ENCODE measurements at regions of chr12 and their contacts with region 1.

Region 1: DNA sequence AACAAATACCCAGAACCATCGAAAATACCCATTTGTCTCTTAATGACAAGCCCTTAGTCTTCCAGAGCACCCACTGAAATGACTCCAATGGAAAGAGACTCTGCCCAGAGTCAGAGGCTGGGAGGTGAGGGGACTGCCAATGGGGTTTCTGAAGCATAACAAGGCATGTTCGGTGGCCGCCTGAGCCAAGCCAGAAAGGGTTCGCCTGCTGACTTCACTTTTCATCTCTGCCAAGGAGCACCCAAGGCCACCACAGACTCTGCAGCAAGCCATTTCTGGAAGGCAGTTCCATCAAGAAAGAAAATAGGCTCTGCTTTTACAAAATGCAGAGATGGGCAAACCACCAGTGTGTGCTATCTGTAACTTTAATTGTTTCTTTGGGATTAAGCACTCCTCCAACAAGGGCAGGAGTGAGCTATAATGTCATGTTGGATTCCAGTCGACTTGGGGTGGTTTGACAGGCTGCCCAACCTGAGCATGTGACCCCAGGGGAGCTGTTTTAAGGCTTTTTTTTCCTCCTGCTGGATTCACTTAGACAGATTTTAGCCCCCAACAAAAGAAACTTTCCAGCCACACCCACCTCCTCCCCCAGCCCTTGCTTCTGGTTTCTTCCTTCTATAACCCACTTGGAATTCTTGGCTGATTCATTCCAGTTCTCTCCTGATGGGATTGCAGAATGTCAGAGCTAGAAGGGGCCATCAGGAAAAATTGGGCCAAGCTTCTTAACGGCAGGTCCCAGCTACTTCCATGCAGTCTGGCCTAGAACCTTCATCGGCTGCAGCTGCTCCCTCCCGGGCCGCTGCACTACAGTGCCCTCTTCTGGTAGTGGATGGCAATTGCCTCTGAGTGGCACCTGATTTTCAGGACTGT is 24.1 kb downstream of the CKAP4 start:
- DNase-seq: peak; percentile 49 to 77 (median 54)
- H3K4me3 ChIP-seq: no peak overlapping the region
- H3K4me3 Mint-ChIP-seq: no peak overlapping the region
- H3K27ac ChIP-seq: no peak overlapping the region
- H3K27ac Mint-ChIP-seq: peak overlapping the region in 2 of 8 donors; percentile 40 to 79
- H3K4me1 ChIP-seq: peaks cover 8% of the 10 kb centered on the region
- H3K4me1 Mint-ChIP-seq: peaks cover 13 to 20% (median 14%) of the 10 kb centered on the region in 3 donors
- H3K27me3 ChIP-seq: no peaks in the 10 kb centered on the region
- H3K27me3 Mint-ChIP-seq: peaks cover 13 to 21% of the 10 kb centered on the region in 2 donors

Region 2: DNA sequence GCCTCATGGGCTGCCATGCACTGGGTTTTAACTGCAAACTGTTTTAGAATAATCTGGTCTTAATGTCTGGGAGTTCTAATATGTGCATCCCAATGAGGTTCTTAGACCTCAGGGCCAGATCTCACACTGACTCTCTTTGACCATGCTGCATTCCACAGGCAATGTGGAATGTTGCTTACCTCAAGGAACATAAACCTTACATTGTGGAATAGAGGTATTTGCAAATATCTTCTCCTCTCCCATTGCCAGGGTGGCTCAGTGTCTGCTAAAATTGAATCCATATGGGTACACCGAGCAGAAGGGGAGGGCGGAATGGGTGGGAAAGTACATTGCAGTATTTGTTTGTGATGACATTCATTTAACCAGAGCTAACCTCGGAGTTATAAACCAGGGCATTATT is 1688.4 kb before region 1 on chr12:
- CTCF ChIA-PET with region 1: no interaction called
- POLR2A ChIA-PET with region 1: no interaction called
- DNase-seq: no peak
- H3K4me3 ChIP-seq: no peak overlapping the region
- H3K4me3 Mint-ChIP-seq: no peak overlapping the region
- H3K27ac ChIP-seq: no peak overlapping the region
- H3K27ac Mint-ChIP-seq: peak overlapping the region in 3 of 8 donors; percentile 30 to 94 (median 56)
- H3K4me1 ChIP-seq: peaks cover 8% of the 10 kb centered on the region
- H3K4me1 Mint-ChIP-seq: peaks cover 76 to 98% (median 96%) of the 10 kb centered on the region in 3 donors
- H3K27me3 ChIP-seq: no peaks in the 10 kb centered on the region
- H3K27me3 Mint-ChIP-seq: no peaks in the 10 kb centered on the region

Region 3: DNA sequence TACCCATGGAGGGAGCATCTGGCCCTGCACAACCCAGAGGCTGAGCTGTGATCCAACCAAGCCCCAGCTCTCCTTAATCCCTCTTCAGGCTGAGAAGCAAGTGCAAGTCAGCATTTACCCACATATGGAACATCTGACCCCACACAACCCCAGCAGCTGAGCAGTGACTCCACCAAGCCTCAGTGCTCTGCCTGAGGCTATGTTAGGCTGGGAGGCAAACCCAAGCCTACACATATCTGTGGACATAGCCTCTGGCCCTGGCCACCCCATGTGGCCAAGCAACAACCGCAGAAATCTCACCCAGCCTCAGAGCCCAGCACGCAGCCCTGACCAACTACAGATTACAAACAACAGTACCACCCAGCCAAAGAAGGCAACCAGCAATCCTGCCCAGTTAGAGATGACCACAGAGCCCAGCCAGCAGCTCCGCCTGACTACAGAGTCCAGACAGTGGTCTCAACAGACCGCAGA is 227.7 kb before region 1 on chr12:
- CTCF ChIA-PET with region 1: no interaction called
- POLR2A ChIA-PET with region 1: no interaction called
- DNase-seq: no peak
- H3K4me3 ChIP-seq: no peak overlapping the region
- H3K4me3 Mint-ChIP-seq: no peak overlapping the region
- H3K27ac ChIP-seq: no peak overlapping the region
- H3K27ac Mint-ChIP-seq: no peak overlapping the region
- H3K4me1 ChIP-seq: no peaks in the 10 kb centered on the region
- H3K4me1 Mint-ChIP-seq: no peaks in the 10 kb centered on the region
- H3K27me3 ChIP-seq: peaks cover 3% of the 10 kb centered on the region
- H3K27me3 Mint-ChIP-seq: peaks cover 4 to 16% of the 10 kb centered on the region in 2 donors

Region 4: GRCh38 chr12:106238152-106238551 is 14.4 kb after region 1 on chr12:
- CTCF ChIA-PET with region 1: interaction called, 12 read pairs
- POLR2A ChIA-PET with region 1: no interaction called
- DNase-seq: no peak
- H3K4me3 ChIP-seq: no peak overlapping the region
- H3K4me3 Mint-ChIP-seq: no peak overlapping the region
- H3K27ac ChIP-seq: no peak overlapping the region
- H3K27ac Mint-ChIP-seq: peak overlapping the region in 1 of 8 donors; percentile 55
- H3K4me1 ChIP-seq: no peaks in the 10 kb centered on the region
- H3K4me1 Mint-ChIP-seq: peaks cover 0 to 1% (median 0%) of the 10 kb centered on the region in 3 donors
- H3K27me3 ChIP-seq: no peaks in the 10 kb centered on the region
- H3K27me3 Mint-ChIP-seq: peaks cover 0 to under 1% of the 10 kb centered on the region in 2 donors

Region 5: GRCh38 chr12:106276032-106276740 is 52.5 kb after region 1 on chr12:
- CTCF ChIA-PET with region 1: interaction called, 23 read pairs
- POLR2A ChIA-PET with region 1: no interaction called
- DNase-seq: no peak
- H3K4me3 ChIP-seq: no peak overlapping the region
- H3K4me3 Mint-ChIP-seq: no peak overlapping the region
- H3K27ac ChIP-seq: no peak overlapping the region
- H3K27ac Mint-ChIP-seq: no peak overlapping the region
- H3K4me1 ChIP-seq: no peaks in the 10 kb centered on the region
- H3K4me1 Mint-ChIP-seq: no peaks in the 10 kb centered on the region
- H3K27me3 ChIP-seq: no peaks in the 10 kb centered on the region
- H3K27me3 Mint-ChIP-seq: peaks cover 0 to under 1% of the 10 kb centered on the region in 2 donors

Region 6: DNA sequence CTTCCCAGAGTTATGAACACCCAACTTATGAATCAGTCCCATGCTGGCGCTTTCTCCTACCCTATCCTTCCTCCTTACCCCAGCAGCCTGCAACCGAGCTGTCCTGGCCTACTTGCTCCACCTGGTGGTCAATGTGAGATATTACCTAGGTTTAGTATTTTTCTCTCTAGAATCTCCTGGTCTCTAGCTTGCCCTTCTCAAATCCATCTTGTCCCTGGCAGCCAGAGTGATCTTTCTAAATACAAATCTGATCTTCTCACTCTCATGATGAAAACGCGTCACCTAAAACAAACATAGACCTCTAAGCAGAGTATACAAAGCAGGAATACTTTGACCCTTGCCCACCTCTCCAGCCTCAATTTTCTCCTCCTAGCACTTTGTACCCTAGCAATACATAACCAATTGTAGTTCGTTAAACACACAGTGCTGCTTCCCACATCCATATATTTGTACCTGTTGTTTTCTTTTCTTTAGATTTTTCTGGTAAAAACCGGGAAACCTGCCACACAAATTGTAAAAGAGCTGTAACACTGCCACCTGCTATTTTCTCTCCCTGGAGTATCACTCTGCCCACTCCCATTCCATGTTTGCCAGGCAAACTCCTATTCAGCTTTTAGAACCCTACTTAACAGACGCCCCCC is 58.9 kb after region 1 on chr12:
- CTCF ChIA-PET with region 1: interaction called, 56 read pairs
- POLR2A ChIA-PET with region 1: interaction called, 3 read pairs
- DNase-seq: peak in 4 of 5 donors; percentile 17 to 63 (median 46)
- H3K4me3 ChIP-seq: no peak overlapping the region
- H3K4me3 Mint-ChIP-seq: no peak overlapping the region
- H3K27ac ChIP-seq: no peak overlapping the region
- H3K27ac Mint-ChIP-seq: peak overlapping the region in 1 of 8 donors; percentile 25
- H3K4me1 ChIP-seq: no peaks in the 10 kb centered on the region
- H3K4me1 Mint-ChIP-seq: no peaks in the 10 kb centered on the region
- H3K27me3 ChIP-seq: no peaks in the 10 kb centered on the region
- H3K27me3 Mint-ChIP-seq: peaks cover 15 to 41% of the 10 kb centered on the region in 2 donors

Region 7: DNA sequence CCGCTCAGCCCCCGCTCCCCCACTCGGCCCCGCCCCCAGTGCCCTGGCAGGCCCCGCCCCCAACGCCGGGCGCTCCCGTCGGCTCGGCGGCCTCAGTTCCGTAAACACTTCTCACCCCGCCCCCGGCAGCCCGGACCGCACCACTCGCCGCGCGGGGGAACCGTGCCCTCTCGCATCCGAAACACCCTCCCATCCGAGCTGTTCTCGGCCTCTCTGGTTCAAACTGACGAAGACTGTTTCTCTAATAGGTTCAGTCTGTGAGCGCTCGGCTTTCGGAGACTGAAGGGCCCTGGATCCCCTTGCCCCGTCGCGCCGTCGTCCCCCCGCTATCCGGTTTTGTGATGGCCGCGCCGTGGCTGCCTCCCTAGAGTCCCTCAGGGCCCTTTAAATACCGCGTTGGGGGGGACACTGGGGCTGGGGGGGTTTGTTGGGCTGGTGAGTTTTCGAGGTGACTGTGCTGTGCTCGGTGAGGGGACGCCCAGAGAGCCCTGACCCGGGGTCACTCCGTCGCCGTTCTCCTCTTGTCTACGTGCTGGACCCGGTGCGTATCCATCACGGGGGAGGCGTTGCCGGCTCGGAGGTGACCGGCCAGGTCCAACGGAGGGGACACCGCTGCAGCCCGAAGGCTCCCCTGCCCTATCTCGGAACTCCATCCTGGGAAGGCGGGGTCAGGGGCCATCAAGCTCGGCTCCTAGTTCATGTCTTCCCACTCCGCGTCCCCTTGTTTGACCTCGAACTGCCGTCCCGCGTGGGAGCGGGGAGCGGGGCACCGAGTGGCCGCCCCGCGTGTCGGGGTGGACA is 78.9 kb after region 1 on chr12 and contains the start of gene TCP11L2:
- CTCF ChIA-PET with region 1: interaction called, 16 read pairs
- POLR2A ChIA-PET with region 1: interaction called, 10 read pairs
- DNase-seq: peak; percentile 85 to 95 (median 90)
- H3K4me3 ChIP-seq: peak within 1 kb of the TSS; percentile 88
- H3K4me3 Mint-ChIP-seq: peak within 1 kb of the TSS; percentile 82 to 98 (median 96)
- H3K27ac ChIP-seq: peak within 1 kb of the TSS; percentile 98
- H3K27ac Mint-ChIP-seq: peak within 1 kb of the TSS; percentile 96 to 100 (median 100)
- H3K4me1 ChIP-seq: peaks cover 59% of the 10 kb centered on the region
- H3K4me1 Mint-ChIP-seq: peaks cover 55 to 61% (median 61%) of the 10 kb centered on the region in 3 donors
- H3K27me3 ChIP-seq: no peaks in the 10 kb centered on the region
- H3K27me3 Mint-ChIP-seq: peaks cover 0 to 8% of the 10 kb centered on the region in 2 donors
- total RNA-seq, gene TCP11L2: 11.8 to 13.0 TPM